Caco-2 (cell line): ENCODE measurements at regions of chr2 and their contacts with region 1.

Region 1: DNA sequence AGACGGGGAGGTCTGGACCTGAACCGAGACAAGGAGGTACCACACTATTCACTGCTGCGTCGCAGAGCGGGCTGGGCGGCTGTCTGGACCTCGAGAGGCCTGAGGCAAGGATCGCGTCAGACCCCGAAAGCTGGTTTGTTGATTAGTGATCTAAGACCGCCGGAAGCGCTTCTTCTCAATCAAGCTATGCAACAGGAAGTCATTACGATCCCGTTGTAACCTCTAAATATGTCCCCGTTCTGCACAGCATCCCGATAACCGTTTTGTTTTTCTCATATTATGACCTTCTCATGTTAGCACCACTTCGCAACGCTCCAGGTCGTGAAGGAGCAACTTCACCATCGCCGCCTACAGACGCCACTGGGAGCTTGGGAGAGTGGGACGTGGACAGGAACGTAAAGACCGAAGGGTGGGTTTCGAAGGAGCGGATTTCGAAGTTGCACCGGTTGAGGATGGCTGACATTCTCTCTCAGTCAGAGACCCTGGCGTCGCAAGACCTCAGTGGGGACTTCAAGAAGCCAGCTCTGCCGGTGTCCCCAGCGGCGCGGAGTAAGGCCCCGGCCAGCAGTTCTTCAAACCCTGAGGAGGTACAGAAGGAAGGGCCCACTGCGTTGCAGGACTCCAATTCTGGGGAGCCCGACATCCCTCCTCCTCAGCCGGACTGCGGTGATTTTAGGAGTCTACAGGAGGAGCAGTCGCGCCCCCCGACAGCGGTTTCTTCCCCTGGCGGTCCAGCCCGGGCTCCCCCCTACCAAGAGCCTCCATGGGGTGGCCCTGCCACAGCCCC is at the starts of genes SLC4A1AP and SUPT7L:
- DNase-seq: peak; percentile 84 to 85
- H3K4me3 ChIP-seq: peak within 1 kb of the TSS; percentile 60
- H3K4me3 Mint-ChIP-seq: peak within 1 kb of the TSS; percentile 99
- H3K27ac Mint-ChIP-seq: peak within 1 kb of the TSS; percentile 100
- H3K4me1 ChIP-seq: peaks cover 6% of the 10 kb centered on the region; the same call in 1 of the 2 replicates
- H3K4me1 Mint-ChIP-seq: peaks cover 14% of the 10 kb centered on the region
- H3K27me3 ChIP-seq: no peaks in the 10 kb centered on the region
- H3K27me3 Mint-ChIP-seq: no peaks in the 10 kb centered on the region
- CTCF ChIP-seq: peak in 1 of 2 experiments; percentile 6
- total RNA-seq, gene SLC4A1AP: 33.8 and 34.3 TPM in 2 replicates
- total RNA-seq, gene SUPT7L: 42.4 and 43.5 TPM in 2 replicates

Region 2: DNA sequence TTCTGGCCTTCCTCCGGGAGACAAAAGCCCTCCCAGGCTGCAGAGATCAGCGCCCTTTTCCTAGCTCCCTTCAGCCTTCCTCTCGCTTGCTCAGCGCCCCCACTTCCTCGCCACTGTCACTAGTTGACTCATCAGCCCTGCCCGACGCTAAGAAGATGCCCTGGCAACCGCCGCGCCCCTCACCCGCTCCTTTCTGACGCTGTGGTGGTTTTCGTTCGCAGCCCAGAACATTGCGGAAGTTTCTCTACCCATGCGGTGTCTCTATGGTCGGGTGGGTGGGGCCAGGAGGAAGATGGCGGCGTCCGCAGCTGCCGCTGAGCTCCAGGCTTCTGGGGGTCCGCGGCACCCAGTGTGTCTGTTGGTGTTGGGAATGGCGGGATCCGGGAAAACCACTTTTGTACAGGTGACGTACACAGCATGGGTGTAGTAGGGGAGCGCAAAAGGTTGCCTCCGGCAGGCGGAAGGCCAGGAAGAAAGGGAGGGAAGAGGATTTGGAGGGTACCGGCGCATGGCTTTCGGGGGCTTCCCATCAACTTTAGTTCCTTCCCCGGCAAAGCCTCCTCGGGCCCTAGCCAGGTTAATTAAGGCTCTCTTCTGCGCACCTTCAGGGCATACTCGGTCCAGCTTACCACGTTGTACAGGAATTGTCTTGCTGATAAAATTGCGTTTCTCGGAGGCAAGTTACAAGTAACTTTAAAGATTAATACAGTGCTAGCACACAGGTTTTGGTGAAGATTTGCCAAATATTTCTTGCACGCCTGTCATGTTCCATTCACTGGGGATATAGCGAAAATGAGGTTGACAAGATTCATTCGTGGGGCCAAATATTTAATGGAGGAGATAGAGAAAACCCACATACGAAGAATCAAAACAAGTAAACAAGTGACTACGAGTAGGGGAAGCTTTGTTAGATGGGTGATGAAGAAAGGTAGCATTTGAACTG is 34.6 kb before region 1 on chr2 and contains the starts of genes CCDC121 and GPN1:
- CTCF ChIA-PET with region 1: no interaction called
- POLR2A ChIA-PET with region 1: interaction called, 3 read pairs
- intact Hi-C with region 1: loop called (anchors 2 kb)
- DNase-seq: peak; percentile 85 to 88
- H3K4me3 ChIP-seq: peak within 1 kb of the TSS; percentile 71
- H3K4me3 Mint-ChIP-seq: no peak within 1 kb of the TSS
- H3K27ac Mint-ChIP-seq: no peak within 1 kb of the TSS
- H3K4me1 ChIP-seq: peaks cover 10% of the 10 kb centered on the region; the same call in 1 of the 2 replicates
- H3K4me1 Mint-ChIP-seq: peaks cover 14% of the 10 kb centered on the region
- H3K27me3 ChIP-seq: no peaks in the 10 kb centered on the region
- H3K27me3 Mint-ChIP-seq: no peaks in the 10 kb centered on the region
- CTCF ChIP-seq: no peak
- total RNA-seq, gene CCDC121: 3.9 and 4.7 TPM in 2 replicates
- total RNA-seq, gene GPN1: 45.9 and 60.9 TPM in 2 replicates

Region 3: DNA sequence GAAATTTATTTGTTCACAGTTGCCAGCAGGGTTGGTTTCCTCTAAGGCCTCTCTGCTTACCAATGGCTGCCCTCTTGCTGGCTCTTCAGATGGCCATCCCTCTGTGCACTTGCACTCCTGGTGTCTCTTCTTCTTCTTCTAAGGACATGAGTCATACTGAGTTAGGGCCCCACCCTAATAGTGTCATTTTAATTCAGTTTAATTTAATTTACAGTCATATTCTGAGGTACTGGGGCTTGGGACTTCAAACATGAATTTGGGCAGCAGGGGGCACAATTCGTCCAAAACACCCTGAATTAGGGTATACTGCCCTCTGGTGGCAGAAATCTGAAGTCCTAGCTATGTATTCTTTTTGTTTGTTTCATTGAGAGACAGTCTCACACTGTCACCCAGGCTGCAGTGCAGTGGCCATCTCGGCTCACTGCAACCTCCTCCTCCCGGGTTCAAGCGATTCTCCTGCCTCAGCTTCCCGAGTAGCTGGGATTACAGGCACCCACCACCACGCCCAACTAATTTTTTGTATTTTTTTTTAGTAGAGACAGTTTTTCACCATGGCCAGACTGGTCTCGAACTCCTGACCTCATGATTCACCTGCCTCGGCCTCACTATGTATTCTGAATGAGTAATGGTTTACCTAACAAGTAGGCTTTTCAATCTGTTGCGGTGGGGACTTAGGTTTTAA is 19.9 kb after region 1 on chr2:
- CTCF ChIA-PET with region 1: interaction called, 22 read pairs
- POLR2A ChIA-PET with region 1: interaction called, 8 read pairs
- intact Hi-C with region 1: no loop called
- DNase-seq: peak; percentile 82 to 93
- H3K4me3 ChIP-seq: no peak overlapping the region
- H3K4me3 Mint-ChIP-seq: no peak overlapping the region
- H3K27ac Mint-ChIP-seq: peak overlapping the region; percentile 81
- H3K4me1 ChIP-seq: peaks cover 28% of the 10 kb centered on the region
- H3K4me1 Mint-ChIP-seq: peaks cover 14% of the 10 kb centered on the region
- H3K27me3 ChIP-seq: no peaks in the 10 kb centered on the region
- H3K27me3 Mint-ChIP-seq: no peaks in the 10 kb centered on the region
- CTCF ChIP-seq: peak; percentile 99 to 100

Region 4: GRCh38 chr2:28080911-28081310 is 417.3 kb after region 1 on chr2:
- CTCF ChIA-PET with region 1: no interaction called
- POLR2A ChIA-PET with region 1: interaction called, 11 read pairs
- intact Hi-C with region 1: no loop called
- DNase-seq: peak; percentile 57 to 74
- H3K4me3 ChIP-seq: no peak overlapping the region
- H3K4me3 Mint-ChIP-seq: no peak overlapping the region
- H3K27ac Mint-ChIP-seq: peak overlapping the region; percentile 71
- H3K4me1 ChIP-seq: peaks cover 27% of the 10 kb centered on the region
- H3K4me1 Mint-ChIP-seq: peaks cover 44% of the 10 kb centered on the region
- H3K27me3 ChIP-seq: no peaks in the 10 kb centered on the region
- H3K27me3 Mint-ChIP-seq: no peaks in the 10 kb centered on the region
- CTCF ChIP-seq: no peak